ENCODE measurements at regions of chr17 and their contacts with region 1.

Region 1: DNA sequence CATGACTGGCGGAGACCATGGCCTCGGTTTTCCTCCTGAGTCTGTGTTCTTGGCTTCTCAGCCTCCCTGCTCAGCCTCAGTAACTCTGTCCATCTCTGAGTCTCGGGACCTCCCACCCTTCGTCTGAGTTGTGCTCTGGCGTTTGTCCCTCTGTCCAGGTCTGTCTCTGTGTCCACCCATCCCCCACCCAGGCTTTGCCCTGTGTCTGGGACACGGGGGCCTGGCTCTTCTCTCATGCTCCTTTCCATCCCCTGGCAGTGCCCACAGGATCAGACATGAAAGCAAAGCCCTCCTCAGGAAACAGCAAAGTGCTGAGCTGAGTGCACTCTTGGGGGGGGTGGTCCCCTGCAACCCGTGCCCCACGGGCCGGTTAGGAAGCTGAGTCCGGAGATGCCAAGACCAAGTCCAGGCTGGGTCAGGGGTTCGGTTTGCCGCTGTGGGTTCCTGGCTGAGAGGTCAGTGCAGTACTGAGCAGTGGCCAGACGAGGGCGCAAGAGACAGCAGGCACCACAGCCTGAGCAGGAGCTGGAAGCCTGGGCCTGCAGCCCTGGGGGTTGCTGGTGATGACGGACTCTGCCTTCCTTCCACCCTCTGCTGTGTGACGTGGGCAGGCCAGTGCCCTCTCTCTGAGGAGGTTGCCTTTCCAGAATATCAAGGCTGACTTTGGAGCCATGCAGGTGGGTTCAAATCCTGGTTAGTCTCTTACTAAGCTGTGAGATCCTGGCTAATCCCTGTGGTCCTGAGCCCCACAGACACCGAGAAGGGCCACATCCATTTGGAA is 2.5 kb downstream of the P2RX1 start:
- H3K4me3 Mint-ChIP-seq: peak overlapping the region; percentile 82
- H3K27ac Mint-ChIP-seq: peak overlapping the region; percentile 92
- H3K4me1 Mint-ChIP-seq: peaks cover 88% of the 10 kb centered on the region
- H3K27me3 Mint-ChIP-seq: peaks cover 2% of the 10 kb centered on the region

Region 2: GRCh38 chr17:3845621-3846441 is 67.9 kb before region 1 on chr17 and contains the start of gene NCBP3:
- intact Hi-C with region 1: no loop called
- H3K4me3 Mint-ChIP-seq: peak within 1 kb of the TSS; percentile 91
- H3K27ac Mint-ChIP-seq: peak within 1 kb of the TSS; percentile 93
- H3K4me1 Mint-ChIP-seq: peaks cover 36% of the 10 kb centered on the region
- H3K27me3 Mint-ChIP-seq: peaks cover 4% of the 10 kb centered on the region

Region 3: DNA sequence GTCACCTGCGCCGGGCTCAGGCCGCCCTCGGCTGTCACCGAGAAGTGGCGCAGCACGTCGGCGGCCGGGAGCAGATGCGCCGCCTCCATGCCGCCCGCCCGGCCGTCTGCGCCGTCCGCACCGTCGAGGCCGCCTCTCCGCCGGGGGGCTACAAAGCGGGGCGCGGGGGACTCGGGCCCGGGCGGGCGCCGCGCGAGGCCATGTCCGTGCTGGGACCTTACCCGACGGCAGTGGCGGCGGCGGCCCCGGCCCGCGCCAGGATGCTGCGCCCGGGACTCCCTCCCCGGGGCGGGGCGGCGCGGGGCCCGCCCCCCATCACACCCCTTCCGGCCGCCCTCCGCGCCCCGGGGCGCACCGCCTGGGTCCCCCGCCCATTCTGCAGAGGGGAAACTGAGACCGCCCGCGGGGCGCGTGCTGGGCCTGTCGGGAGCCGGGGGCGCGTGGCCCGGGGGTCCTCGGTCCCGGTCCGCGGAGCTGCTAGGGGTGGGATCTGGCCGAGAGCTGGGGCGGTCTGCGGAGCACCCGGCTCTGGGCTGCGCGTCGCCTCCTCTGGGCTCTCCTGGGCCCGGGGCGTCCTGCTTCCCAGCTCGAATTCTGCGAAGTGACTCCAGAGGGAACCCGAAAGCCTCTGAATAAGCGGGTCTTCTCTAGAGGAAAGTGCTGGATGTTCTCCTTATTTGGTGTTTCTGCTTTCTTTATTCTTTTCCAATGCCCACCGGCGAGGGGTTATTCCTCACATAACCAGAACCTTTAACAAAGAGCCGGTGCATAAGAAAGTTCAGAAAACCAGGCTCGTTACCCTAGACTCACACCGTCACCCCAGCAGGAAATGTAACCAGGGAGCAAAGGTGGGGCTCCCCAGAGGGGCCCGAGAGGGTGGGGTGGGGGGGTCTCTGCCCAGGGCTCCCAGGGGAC is 50.7 kb after region 1 on chr17 and contains the start of gene ATP2A3:
- intact Hi-C with region 1: loop called (anchors 5 kb)
- H3K4me3 Mint-ChIP-seq: peak within 1 kb of the TSS; percentile 81
- H3K27ac Mint-ChIP-seq: peak within 1 kb of the TSS; percentile 73
- H3K4me1 Mint-ChIP-seq: peaks cover 48% of the 10 kb centered on the region
- H3K27me3 Mint-ChIP-seq: peaks cover 7% of the 10 kb centered on the region